Transverse colon (tissue), 4 donors: ENCODE measurements at regions of chr4 and their contacts with region 1.

Region 1: DNA sequence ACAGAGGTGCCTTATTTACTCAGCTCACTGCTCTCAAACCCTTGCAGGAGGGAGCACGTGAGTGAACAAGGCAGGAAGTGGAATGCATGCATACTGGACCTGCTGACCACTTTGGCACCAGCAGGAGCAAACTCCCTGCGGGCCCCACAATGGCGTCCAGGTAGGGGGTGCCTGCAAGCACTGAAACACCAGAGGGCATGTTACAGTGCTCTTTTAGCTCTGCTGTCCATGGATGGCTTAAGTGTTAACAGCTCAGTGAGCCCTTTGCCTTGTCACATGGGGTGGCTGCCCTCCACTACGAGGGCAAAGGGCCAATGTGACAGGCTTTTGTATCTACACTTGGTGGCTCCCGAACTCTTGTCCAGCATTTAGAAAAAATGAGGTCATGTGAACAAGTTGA is 199.5 kb upstream of the UGT8 start:
- DNase-seq: no peak
- H3K4me3 ChIP-seq: no peak overlapping the region
- H3K27ac ChIP-seq: no peak overlapping the region
- H3K4me1 ChIP-seq: peaks cover 0 to 42% (median 13%) of the 10 kb centered on the region in 4 donors
- H3K27me3 ChIP-seq: no peaks in the 10 kb centered on the region
- CTCF ChIP-seq: no peak
- EP300 ChIP-seq: no peak
- POLR2A ChIP-seq: no peak

Region 2: DNA sequence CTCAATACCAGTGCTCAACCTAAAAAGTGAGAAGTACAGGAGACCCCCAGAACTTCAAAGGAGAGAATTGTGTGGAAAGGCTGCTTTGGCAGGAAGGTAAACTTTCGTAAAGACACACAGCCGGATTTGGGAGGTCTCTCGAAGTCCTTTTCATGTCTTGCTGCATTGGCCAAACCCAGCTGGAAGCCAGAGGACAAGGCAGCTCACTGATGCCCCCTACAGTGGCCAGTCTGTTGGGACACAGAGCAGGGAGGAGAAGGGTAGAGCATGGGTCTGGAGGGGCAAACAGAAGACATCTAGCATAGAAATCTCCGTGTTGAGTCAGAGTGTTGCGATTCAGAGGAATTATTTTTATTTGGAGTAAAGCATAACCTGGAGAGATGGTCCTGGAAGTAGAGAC is 1150.8 kb before region 1 on chr4:
- in situ Hi-C with region 1: no loop called
- intact Hi-C with region 1: no loop called
- DNase-seq: no peak
- H3K4me3 ChIP-seq: no peak overlapping the region
- H3K27ac ChIP-seq: no peak overlapping the region
- H3K4me1 ChIP-seq: no peaks in the 10 kb centered on the region
- H3K27me3 ChIP-seq: no peaks in the 10 kb centered on the region
- CTCF ChIP-seq: no peak
- EP300 ChIP-seq: no peak
- POLR2A ChIP-seq: no peak

Region 3: GRCh38 chr4:114659386-114660008 is 260.4 kb after region 1 on chr4:
- in situ Hi-C with region 1: loop called in 3 of 4 experiments (anchors 10 to 25 kb)
- intact Hi-C with region 1: no loop called
- DNase-seq: peak; percentile 70
- H3K4me3 ChIP-seq: no peak overlapping the region
- H3K27ac ChIP-seq: no peak overlapping the region
- H3K4me1 ChIP-seq: peaks cover 0 to 7% (median 0%) of the 10 kb centered on the region in 4 donors
- H3K27me3 ChIP-seq: no peaks in the 10 kb centered on the region
- CTCF ChIP-seq: peak; percentile 72 to 80 (median 76)
- EP300 ChIP-seq: no peak
- POLR2A ChIP-seq: no peak

Region 4: DNA sequence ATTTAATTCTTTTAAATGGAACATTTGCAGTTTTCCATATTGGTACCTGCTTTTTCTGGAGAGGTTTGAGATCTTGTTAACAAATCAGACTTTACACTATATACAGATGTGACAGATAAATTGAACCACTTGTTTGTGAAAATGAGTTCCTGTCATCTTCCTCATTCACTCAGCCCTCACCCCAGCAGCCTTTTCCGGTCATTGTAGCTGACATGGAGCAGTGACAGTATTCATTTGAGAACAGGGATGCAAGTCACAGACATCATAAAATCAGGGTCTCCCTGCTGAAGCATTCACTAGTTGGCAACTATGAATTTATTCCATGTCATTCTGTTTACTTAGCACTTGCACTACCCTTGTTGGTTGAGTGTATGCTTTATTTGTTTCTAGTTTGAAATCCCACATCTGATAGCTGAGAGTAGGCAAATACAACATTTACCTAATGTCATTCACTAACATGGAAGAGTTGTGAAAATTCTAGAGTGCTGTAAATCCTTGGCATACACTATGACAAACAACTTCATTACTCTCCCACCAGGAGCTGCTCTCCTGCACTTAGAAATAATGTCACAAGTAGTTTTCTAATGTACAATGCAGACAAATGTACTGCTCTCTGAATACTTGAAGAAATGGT is 278.4 kb after region 1 on chr4:
- in situ Hi-C with region 1: loop called in 3 of 4 experiments (anchors 10 to 25 kb)
- intact Hi-C with region 1: no loop called
- DNase-seq: no peak
- H3K4me3 ChIP-seq: no peak overlapping the region
- H3K27ac ChIP-seq: no peak overlapping the region
- H3K4me1 ChIP-seq: no peaks in the 10 kb centered on the region
- H3K27me3 ChIP-seq: no peaks in the 10 kb centered on the region
- CTCF ChIP-seq: no peak
- EP300 ChIP-seq: no peak
- POLR2A ChIP-seq: no peak